Activated B cell treated with CpG ODN at 0.5 μM for 24 hours (primary cell): ENCODE measurements at regions of chr4 and their contacts with region 1.

Region 1: DNA sequence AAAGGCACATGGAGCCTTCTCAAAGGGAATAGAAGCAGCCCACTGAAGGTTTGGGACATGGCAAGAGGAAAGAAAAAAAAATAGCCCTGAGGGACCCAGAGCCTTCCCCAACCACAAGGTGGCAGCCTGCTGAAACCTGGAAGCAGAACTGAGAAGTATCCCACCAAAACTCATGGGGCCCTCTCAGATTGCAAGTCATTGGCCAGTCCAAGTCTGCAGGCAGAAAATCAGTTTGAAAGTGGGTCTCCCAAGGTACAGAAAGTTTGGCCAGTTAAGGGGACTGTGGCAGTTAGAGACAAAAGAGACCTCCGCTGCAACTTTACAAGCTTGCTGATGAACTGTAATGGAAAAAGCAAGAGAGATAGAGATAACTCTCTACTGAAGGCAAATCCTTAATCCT is 155.8 kb downstream of the ANTXR2 start:
- DNase-seq: peak; percentile 25
- ATAC-seq: peak; percentile 68
- H3K4me3 Mint-ChIP-seq: no peak overlapping the region
- H3K27ac Mint-ChIP-seq: no peak overlapping the region
- H3K4me1 Mint-ChIP-seq: peaks cover 4% of the 10 kb centered on the region
- H3K27me3 Mint-ChIP-seq: no peaks in the 10 kb centered on the region
- CTCF ChIP-seq: no peak

Region 2: GRCh38 chr4:79893456-79893855 is 23.8 kb before region 1 on chr4:
- CTCF ChIA-PET with region 1: no interaction called
- POLR2A ChIA-PET with region 1: no interaction called
- intact Hi-C with region 1: no loop called
- DNase-seq: no peak
- ATAC-seq: no peak
- H3K4me3 Mint-ChIP-seq: no peak overlapping the region
- H3K27ac Mint-ChIP-seq: no peak overlapping the region
- H3K4me1 Mint-ChIP-seq: no peaks in the 10 kb centered on the region
- H3K27me3 Mint-ChIP-seq: peaks cover 5% of the 10 kb centered on the region
- CTCF ChIP-seq: no peak

Region 3: DNA sequence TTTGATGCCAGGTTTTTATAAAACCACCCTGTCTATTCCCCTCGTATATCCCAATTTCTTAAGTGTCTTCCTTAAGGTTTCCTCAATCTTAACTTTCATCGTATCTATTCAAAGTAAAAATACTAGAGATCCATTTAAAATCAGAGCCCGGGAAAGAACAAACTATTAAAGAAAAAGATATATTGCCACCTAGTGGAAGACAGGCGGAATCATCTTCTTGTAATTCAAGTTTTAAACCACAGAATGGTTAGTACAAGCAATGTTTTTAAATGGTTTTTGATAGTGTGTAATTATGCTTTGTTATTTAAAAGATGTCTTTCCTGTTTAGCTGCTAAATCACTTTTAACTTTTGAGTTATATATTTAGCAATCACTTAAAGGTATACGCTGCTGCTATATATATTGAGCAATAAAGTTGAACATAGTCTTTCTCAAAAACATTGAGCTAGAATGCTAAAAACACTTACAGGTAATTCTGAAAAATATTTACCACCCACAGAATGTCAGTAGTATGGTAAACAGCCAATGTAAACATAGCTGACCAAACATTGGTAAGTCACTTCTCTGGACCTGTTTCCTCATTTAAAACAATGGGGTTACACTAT is 298.3 kb after region 1 on chr4:
- CTCF ChIA-PET with region 1: interaction called, 11 read pairs
- POLR2A ChIA-PET with region 1: no interaction called
- intact Hi-C with region 1: loop called (anchors 1 kb)
- DNase-seq: no peak
- ATAC-seq: no peak
- H3K4me3 Mint-ChIP-seq: no peak overlapping the region
- H3K27ac Mint-ChIP-seq: no peak overlapping the region
- H3K4me1 Mint-ChIP-seq: peaks cover 2% of the 10 kb centered on the region
- H3K27me3 Mint-ChIP-seq: peaks cover 28% of the 10 kb centered on the region
- CTCF ChIP-seq: peak; percentile 86